GM10248 (cell line): ENCODE measurements at regions of chr10 and their contacts with region 1.

Region 1: DNA sequence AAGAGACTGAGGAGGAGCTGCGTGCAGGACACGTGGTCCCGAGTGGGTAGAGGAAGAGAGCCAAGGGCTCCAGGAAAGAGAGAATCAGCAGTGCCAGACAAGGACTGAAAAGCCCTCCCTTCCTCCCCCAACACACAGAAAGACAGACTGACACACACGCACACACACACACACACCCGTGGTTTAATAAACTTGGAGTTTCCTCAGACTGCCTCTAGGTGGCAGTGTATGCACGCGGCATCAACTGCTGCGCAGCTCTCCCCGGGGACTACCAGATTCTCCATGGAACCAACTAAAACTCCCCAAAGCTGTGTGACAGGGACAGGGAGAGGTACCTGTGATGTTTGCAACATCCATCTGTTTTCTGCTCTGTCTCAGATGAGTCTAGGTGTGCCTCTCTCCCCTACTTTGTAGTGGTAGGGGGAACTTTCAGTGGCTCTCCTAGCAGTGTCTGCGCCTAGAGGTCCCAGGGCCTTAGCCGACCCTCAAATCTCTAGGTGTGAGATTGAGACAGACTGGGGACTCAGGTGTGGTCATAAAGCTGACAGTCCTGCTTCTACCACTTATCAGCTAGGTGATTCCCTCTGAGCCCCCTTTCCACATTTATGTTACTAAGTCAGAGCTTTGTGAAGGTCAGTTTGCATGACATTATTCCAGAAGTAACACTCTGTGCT is 9.3 kb upstream of the TSPAN14 start:
- DNase-seq: peak; percentile 76
- CTCF ChIP-seq: peak; percentile 81

Region 2: DNA sequence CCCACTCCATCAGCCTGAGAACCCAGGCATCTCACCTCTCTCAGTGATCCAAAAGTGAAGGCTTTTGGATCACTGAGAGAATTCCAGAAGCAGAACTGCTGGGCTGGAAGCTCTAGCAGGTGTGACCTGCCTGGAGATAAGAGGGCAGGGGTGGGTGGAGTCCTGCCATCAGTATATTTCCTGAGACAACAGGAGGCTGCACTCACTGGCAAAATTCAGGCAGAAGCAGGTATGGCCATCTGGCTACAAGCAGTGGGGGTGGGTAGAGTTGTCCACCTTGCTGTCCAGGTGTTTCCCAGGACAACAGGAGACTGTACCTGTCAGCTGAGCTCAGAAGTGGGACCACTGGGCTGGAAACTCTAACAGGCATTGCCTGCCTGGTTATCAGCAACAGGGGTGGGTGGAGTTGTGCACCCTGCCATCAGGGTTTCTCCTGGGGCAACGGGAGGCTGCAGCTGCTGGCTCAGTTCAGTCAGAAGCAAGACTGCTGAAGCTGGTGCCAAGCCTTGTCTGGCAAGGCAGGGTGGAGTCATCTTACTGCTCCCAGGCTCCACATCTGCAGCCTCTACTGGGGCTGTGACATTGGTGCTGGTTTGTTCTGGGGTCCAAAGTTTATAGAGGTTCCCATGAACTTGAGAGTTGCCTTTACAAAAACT is 448.7 kb before region 1 on chr10:
- CTCF ChIA-PET with region 1: no interaction called
- POLR2A ChIA-PET with region 1: no interaction called
- DNase-seq: no peak
- CTCF ChIP-seq: no peak

Region 3: DNA sequence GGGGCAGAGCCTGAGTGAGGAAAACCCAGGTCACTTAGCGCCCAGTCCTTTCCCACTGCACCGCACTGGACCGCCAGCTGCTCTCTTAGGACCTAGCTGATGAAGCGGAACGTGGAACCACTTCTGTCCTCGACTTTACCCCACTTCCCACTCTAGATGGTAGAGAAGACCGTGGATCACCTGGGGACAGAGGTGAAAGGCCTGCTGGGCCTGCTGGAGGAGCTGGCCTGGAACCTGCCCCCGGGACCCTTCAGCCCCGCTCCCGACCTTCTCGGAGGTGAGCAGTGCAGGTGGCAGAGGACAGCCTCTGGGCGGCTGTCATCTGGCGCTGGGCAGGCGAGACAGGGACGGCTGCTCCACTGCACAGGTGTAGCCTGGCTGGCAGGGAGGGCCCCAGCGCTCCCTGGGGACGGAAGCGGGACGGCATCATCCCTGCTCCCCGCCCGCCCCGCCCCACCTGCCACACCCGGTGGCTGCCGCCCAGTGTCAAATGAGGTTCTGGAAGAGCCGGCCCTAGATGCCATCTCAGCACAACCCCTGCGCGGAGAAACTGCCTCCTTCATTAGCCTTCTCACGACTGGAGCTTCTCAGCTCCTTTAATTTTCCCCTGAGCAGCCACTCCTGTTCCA is 300.6 kb before region 1 on chr10:
- CTCF ChIA-PET with region 1: no interaction called
- POLR2A ChIA-PET with region 1: no interaction called
- DNase-seq: peak; percentile 59
- CTCF ChIP-seq: no peak

Region 4: GRCh38 chr10:80333983-80334382 is 110.8 kb before region 1 on chr10:
- CTCF ChIA-PET with region 1: no interaction called
- POLR2A ChIA-PET with region 1: no interaction called
- DNase-seq: no peak
- CTCF ChIP-seq: no peak

Region 5: GRCh38 chr10:80408242-80409101 is 36.3 kb before region 1 on chr10 and contains the start of gene PRXL2A:
- CTCF ChIA-PET with region 1: interaction called, 12 read pairs
- POLR2A ChIA-PET with region 1: interaction called, 5 read pairs
- DNase-seq: peak; percentile 96
- CTCF ChIP-seq: peak; percentile 0

Region 6: DNA sequence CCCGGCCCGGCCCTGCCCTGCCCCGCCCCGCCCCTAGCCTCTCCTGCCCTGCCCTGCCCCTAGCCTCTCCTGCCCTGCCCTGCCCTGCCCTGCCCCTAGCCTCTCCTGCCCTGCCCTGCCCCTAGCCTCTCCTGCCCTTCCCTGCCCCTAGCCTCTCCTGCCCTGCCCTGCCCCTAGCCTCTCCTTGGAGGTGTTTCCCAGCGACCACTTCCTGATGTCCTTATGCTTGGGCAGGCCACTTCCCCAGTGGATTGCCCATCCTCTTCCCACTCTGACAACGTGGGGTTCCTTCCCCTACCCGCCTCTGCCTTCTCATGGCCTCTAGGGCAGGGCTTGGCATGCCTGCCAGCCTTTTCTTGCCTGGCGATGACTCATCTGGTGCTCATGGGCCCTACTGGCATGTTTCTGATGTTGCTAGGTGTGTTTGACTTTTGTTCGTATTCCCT is 15.2 kb before region 1 on chr10:
- CTCF ChIA-PET with region 1: interaction called, 62 read pairs
- POLR2A ChIA-PET with region 1: no interaction called
- DNase-seq: no peak
- CTCF ChIP-seq: no peak

Region 7: GRCh38 chr10:80472234-80473095 is 27.7 kb after region 1 on chr10:
- CTCF ChIA-PET with region 1: interaction called, 31 read pairs
- POLR2A ChIA-PET with region 1: interaction called, 3 read pairs
- DNase-seq: peak; percentile 76
- CTCF ChIP-seq: no peak